Activated CD4-positive, alpha-beta memory T cell treated with anti-CD3 and anti-CD28 coated beads for 36 hours (primary cell): ENCODE measurements at regions of chr2 and their contacts with region 1.

Region 1: DNA sequence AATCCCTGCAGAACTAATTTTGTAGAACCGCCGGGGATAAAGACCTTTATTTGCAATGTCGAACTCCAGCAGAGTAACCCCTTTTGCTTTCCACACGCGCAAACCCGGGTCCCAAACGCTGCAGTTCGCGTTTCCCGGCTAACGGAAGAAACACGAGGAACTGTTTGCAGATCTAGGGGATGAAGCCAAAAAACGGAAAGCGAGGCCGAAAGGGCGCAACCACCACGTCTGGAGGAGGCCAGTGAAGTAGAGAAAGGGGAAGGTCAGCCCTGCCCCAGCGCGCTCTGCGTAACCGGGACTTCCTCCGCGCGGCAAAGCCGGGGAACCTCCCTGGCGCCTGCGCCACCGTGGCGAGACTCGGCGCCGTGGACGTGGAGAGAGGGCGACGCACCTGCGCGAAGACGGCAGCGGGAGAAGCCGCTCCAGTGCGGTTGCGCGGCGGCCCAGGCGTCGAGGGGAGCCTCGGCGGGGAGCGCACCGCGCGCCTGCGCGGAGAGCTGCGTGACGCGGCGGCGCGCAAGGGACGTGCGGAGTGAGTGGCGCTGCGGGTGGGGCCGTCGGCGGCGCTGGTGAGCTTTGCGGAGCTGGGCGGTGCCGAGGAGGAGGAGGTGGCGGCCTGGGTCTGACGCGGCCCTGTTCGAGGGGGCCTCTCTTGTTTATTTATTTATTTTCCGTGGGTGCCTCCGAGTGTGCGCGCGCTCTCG is at the start of gene PPP1CB:
- DNase-seq: peak; percentile 96
- H3K4me3 Mint-ChIP-seq: peak within 1 kb of the TSS; percentile 85
- H3K27ac Mint-ChIP-seq: peak within 1 kb of the TSS; percentile 96
- H3K4me1 Mint-ChIP-seq: peaks cover 51% of the 10 kb centered on the region
- H3K27me3 Mint-ChIP-seq: no peaks in the 10 kb centered on the region
- total RNA-seq, gene PPP1CB: 238 to 256 TPM

Region 2: GRCh38 chr2:28488858-28489575 is 262.4 kb before region 1 on chr2:
- CTCF ChIA-PET with region 1: no interaction called
- POLR2A ChIA-PET with region 1: no interaction called
- intact Hi-C with region 1: no loop called
- DNase-seq: no peak
- H3K4me3 Mint-ChIP-seq: no peak overlapping the region
- H3K27ac Mint-ChIP-seq: no peak overlapping the region
- H3K4me1 Mint-ChIP-seq: peaks cover 9% of the 10 kb centered on the region
- H3K27me3 Mint-ChIP-seq: no peaks in the 10 kb centered on the region

Region 3: GRCh38 chr2:28583899-28584553 is 167.4 kb before region 1 on chr2:
- CTCF ChIA-PET with region 1: interaction called, 5 read pairs
- POLR2A ChIA-PET with region 1: interaction called, 10 read pairs
- intact Hi-C with region 1: loop called (anchors 2 kb)
- DNase-seq: peak; percentile 86
- H3K4me3 Mint-ChIP-seq: peak overlapping the region; percentile 46
- H3K27ac Mint-ChIP-seq: peak overlapping the region; percentile 78
- H3K4me1 Mint-ChIP-seq: peaks cover 46% of the 10 kb centered on the region
- H3K27me3 Mint-ChIP-seq: no peaks in the 10 kb centered on the region

Region 4: GRCh38 chr2:28621172-28622100 is 130.0 kb before region 1 on chr2:
- CTCF ChIA-PET with region 1: interaction called, 5 read pairs
- POLR2A ChIA-PET with region 1: interaction called, 13 read pairs
- intact Hi-C with region 1: loop called (anchors 1 kb)
- DNase-seq: peak; percentile 85
- H3K4me3 Mint-ChIP-seq: peak overlapping the region; percentile 53
- H3K27ac Mint-ChIP-seq: peak overlapping the region; percentile 98
- H3K4me1 Mint-ChIP-seq: peaks cover 96% of the 10 kb centered on the region
- H3K27me3 Mint-ChIP-seq: no peaks in the 10 kb centered on the region

Region 5: DNA sequence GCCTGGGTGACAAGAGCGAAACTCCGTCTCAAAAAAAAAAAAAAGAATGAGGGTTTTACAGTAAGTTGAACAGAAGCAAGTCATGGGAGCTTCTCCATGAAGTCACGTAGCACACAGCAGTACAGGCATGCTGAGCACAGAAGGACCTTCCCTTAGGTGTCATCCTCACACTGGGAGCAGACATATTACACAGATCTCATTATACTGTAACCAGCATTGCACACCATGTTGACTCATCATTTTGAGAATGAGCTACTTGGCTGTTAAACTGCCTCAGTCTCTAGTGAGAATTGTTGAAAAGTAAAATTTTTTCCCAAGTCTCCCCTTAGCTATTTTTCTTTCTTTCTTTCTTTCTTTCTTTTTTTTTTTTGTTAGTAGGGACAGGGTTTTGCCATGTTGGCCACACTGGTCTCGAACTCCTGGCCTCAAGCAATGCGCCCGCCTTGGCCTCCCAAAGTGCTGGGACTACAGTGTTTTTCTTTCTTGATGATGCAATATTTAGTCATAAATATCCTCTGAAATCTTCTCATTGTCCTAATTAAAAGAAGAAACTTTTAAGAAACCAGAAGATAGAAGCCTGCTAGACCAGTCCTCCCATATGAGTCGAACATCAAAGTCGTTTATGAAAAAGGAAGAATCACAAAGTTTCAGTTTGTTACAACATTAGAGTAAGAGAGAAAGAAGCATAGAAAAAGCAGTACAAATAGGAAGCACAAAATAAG is 37.7 kb before region 1 on chr2:
- CTCF ChIA-PET with region 1: no interaction called
- POLR2A ChIA-PET with region 1: no interaction called
- intact Hi-C with region 1: loop called (anchors 5 kb)
- DNase-seq: peak; percentile 16
- H3K4me3 Mint-ChIP-seq: no peak overlapping the region
- H3K27ac Mint-ChIP-seq: peak overlapping the region; percentile 65
- H3K4me1 Mint-ChIP-seq: peaks cover 14% of the 10 kb centered on the region
- H3K27me3 Mint-ChIP-seq: no peaks in the 10 kb centered on the region

Region 6: GRCh38 chr2:28894470-28895177 is 143.2 kb after region 1 on chr2 and contains the start of gene WDR43:
- CTCF ChIA-PET with region 1: interaction called, 3 read pairs
- POLR2A ChIA-PET with region 1: interaction called, 5 read pairs
- intact Hi-C with region 1: loop called (anchors 1 kb)
- DNase-seq: peak; percentile 98
- H3K4me3 Mint-ChIP-seq: peak within 1 kb of the TSS; percentile 93
- H3K27ac Mint-ChIP-seq: peak within 1 kb of the TSS; percentile 94
- H3K4me1 Mint-ChIP-seq: peaks cover 34% of the 10 kb centered on the region
- H3K27me3 Mint-ChIP-seq: no peaks in the 10 kb centered on the region
- total RNA-seq, gene WDR43: 72.7 to 84.8 TPM